Naive thymus-derived CD4-positive, alpha-beta T cell (primary cell): ENCODE measurements at regions of chr2 and their contacts with region 1.

Region 1: DNA sequence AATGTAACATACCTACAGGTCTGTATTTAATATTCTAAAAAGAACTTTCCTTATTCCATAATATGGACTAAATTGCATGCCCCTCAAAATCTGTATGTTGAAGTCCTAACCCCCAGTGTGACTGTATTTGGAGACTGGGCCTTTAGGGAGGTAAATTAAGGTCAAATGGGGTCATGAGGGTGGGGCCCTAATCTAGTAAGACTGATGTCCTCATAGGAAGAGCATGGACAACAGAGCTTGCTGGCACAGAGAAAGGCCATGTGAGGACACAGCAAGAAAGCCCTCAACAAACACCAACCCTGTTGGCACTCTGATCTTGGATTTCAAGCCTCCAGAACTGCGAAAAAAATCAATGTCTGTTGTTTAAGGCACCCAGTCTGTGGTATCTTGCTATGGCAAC is 18.6 kb downstream of the SF3B1 start:
- DNase-seq: no peak
- ATAC-seq: no peak
- H3K4me3 ChIP-seq: no peak overlapping the region
- H3K4me3 Mint-ChIP-seq: no peak overlapping the region
- H3K27ac ChIP-seq: no peak overlapping the region
- H3K27ac Mint-ChIP-seq: peak overlapping the region in 2 of 9 donors; percentile 17 to 59
- H3K4me1 ChIP-seq: peaks cover 0 to 4% of the 10 kb centered on the region in 2 donors
- H3K4me1 Mint-ChIP-seq: peaks cover 9 to 26% (median 15%) of the 10 kb centered on the region in 7 donors
- H3K27me3 ChIP-seq: no peaks in the 10 kb centered on the region
- H3K27me3 Mint-ChIP-seq: no peaks in the 10 kb centered on the region

Region 2: DNA sequence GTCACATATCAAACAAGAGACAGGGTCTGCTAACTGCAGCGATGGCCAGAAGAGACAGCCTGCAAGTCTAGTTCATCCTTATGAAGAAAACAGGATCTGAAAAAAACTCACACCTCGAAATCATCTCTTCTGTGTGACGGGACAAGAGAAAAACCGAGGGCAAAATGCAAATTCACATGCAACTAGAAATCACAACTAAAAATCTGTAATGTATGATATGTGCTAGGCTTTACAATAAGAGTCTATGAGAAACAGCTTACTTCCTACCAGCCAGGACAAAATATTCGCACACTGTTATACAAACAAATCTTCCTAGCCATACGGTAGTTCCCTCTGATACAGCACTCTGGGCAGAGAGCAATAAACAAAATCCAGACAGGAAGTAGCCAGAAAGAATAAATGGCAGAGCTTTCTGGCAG is 154.5 kb before region 1 on chr2:
- CTCF ChIA-PET with region 1: no interaction called
- POLR2A ChIA-PET with region 1: no interaction called
- intact Hi-C with region 1: no loop called
- DNase-seq: peak in 3 of 9 donors; percentile 30 to 35 (median 34)
- ATAC-seq: peak; percentile 45
- H3K4me3 ChIP-seq: peak overlapping the region; percentile 43
- H3K4me3 Mint-ChIP-seq: peak overlapping the region in 9 of 10 donors; percentile 64 to 85 (median 70)
- H3K27ac ChIP-seq: peak overlapping the region; percentile 54
- H3K27ac Mint-ChIP-seq: peak overlapping the region; percentile 86 to 96 (median 93)
- H3K4me1 ChIP-seq: peaks cover 79 to 81% of the 10 kb centered on the region in 2 donors
- H3K4me1 Mint-ChIP-seq: peaks cover 63 to 93% (median 84%) of the 10 kb centered on the region in 7 donors
- H3K27me3 ChIP-seq: no peaks in the 10 kb centered on the region
- H3K27me3 Mint-ChIP-seq: no peaks in the 10 kb centered on the region

Region 3: GRCh38 chr2:197405582-197405981 is 10.7 kb before region 1 on chr2:
- CTCF ChIA-PET with region 1: no interaction called
- POLR2A ChIA-PET with region 1: interaction called, 3 read pairs
- intact Hi-C with region 1: loop called in 1 of 2 experiments (anchors 1 kb)
- DNase-seq: no peak
- ATAC-seq: no peak
- H3K4me3 ChIP-seq: no peak overlapping the region
- H3K4me3 Mint-ChIP-seq: no peak overlapping the region
- H3K27ac ChIP-seq: no peak overlapping the region
- H3K27ac Mint-ChIP-seq: no peak overlapping the region
- H3K4me1 ChIP-seq: no peaks in the 10 kb centered on the region
- H3K4me1 Mint-ChIP-seq: peaks cover 0 to 5% (median 0%) of the 10 kb centered on the region in 7 donors
- H3K27me3 ChIP-seq: no peaks in the 10 kb centered on the region
- H3K27me3 Mint-ChIP-seq: no peaks in the 10 kb centered on the region